ENCODE measurements at regions of chr6 and their contacts with region 1.

Region 1: DNA sequence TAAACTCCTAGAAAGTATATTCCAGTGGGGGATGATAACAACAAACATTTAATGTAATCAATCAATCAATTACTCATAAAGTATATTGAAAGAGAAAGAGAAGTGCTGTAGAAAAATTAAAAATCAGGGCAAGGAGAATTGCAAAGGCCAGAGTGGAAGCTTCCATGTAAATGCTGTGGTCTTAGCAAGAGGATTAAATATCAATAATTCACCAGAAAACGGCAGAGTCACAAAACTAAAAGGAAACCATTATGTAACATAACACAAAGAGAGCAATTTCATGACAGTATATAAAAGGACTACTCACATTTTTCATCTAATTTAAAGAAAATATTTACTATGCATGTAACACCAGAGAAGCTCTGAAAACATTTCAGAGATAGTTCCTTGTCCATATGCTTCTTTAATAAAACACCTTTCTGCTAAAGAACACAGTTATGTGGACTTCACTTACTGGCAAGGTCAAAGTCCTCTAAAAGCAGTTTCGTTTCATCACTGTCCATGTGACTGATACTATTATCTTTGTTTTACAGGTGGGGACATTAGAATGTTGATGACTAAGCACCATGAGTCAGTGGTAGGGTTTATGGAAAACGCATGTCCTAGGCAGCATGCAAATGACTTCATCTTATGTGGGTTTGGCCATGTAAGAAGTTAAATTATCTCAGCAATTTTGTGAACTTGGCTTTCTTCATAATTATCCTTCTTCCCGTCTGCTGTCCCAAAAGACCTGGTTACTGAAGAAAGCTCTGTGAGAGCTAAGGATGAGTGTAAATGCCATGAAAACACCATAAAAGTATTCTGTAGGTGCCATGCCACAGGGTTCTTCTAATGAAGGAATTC is 185.8 kb upstream of the TENT5A start:
- DNase-seq: peak; percentile 69 to 72
- H3K4me3 ChIP-seq: peak overlapping the region; percentile 12; the same call in 1 of the 2 replicates
- H3K4me3 Mint-ChIP-seq: peak overlapping the region; percentile 64
- H3K27ac Mint-ChIP-seq: peak overlapping the region; percentile 95
- H3K4me1 ChIP-seq: peaks cover 55% of the 10 kb centered on the region
- H3K4me1 Mint-ChIP-seq: peaks cover 40% of the 10 kb centered on the region
- H3K27me3 ChIP-seq: no peaks in the 10 kb centered on the region
- H3K27me3 Mint-ChIP-seq: no peaks in the 10 kb centered on the region
- CTCF ChIP-seq: no peak

Region 2: DNA sequence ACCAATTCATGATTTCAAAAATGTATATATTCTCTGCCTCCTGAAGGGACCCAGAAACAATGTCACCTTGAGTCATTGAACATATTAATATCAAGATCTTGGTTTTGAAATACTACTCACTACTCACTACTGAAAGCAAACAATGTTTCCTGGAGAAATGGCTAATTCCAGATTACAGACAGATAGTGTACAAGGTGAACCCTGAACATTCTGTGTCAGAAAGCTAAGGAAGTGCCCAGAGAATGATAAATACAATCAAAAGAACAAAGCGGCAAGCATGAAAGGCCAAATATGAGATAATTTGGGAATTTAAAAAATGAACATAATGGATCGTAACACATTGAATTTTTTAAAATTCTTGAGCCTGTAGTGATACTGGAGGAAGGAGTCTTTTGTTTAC is 84.3 kb before region 1 on chr6:
- CTCF ChIA-PET with region 1: no interaction called
- POLR2A ChIA-PET with region 1: no interaction called
- intact Hi-C with region 1: loop called (anchors 1 kb)
- DNase-seq: peak in 1 of 2 experiments; percentile 63
- H3K4me3 ChIP-seq: no peak overlapping the region
- H3K4me3 Mint-ChIP-seq: peak overlapping the region; percentile 58
- H3K27ac Mint-ChIP-seq: peak overlapping the region; percentile 87
- H3K4me1 ChIP-seq: peaks cover 51% of the 10 kb centered on the region
- H3K4me1 Mint-ChIP-seq: peaks cover 37% of the 10 kb centered on the region
- H3K27me3 ChIP-seq: no peaks in the 10 kb centered on the region
- H3K27me3 Mint-ChIP-seq: no peaks in the 10 kb centered on the region
- CTCF ChIP-seq: no peak

Region 3: GRCh38 chr6:81886157-81886556 is 52.1 kb before region 1 on chr6:
- CTCF ChIA-PET with region 1: no interaction called
- POLR2A ChIA-PET with region 1: no interaction called
- intact Hi-C with region 1: no loop called
- DNase-seq: no peak
- H3K4me3 ChIP-seq: no peak overlapping the region
- H3K4me3 Mint-ChIP-seq: no peak overlapping the region
- H3K27ac Mint-ChIP-seq: peak overlapping the region; percentile 53
- H3K4me1 ChIP-seq: peaks cover 24% of the 10 kb centered on the region
- H3K4me1 Mint-ChIP-seq: peaks cover 7% of the 10 kb centered on the region
- H3K27me3 ChIP-seq: no peaks in the 10 kb centered on the region
- H3K27me3 Mint-ChIP-seq: no peaks in the 10 kb centered on the region
- CTCF ChIP-seq: no peak

Measured in Caco-2 (cell line).